ENCODE measurements at regions of chr6 and their contacts with region 1.

Region 1: GRCh38 chr6:136737871-136738691 is 54.2 kb downstream of the MAP3K5 start:
- DNase-seq: peak; percentile 70
- H3K4me3 ChIP-seq: no peak overlapping the region
- H3K27ac ChIP-seq: no peak overlapping the region
- H3K4me1 ChIP-seq: peaks cover 4% of the 10 kb centered on the region
- H3K27me3 ChIP-seq: no peaks in the 10 kb centered on the region
- CTCF ChIP-seq: no peak
- POLR2A ChIP-seq: no peak

Region 2: GRCh38 chr6:136716917-136717715 is 21.0 kb before region 1 on chr6:
- CTCF ChIA-PET with region 1: interaction called, 11 read pairs
- POLR2A ChIA-PET with region 1: no interaction called
- dilution Hi-C with region 1: no loop called
- intact Hi-C with region 1: loop called (anchors 2 kb)
- DNase-seq: no peak
- H3K4me3 ChIP-seq: peak overlapping the region in 2 of 3 experiments; percentile 9 to 36
- H3K27ac ChIP-seq: peak overlapping the region; percentile 45
- H3K4me1 ChIP-seq: peaks cover 28% of the 10 kb centered on the region
- H3K27me3 ChIP-seq: no peaks in the 10 kb centered on the region
- CTCF ChIP-seq: no peak
- POLR2A ChIP-seq: no peak

Region 3: DNA sequence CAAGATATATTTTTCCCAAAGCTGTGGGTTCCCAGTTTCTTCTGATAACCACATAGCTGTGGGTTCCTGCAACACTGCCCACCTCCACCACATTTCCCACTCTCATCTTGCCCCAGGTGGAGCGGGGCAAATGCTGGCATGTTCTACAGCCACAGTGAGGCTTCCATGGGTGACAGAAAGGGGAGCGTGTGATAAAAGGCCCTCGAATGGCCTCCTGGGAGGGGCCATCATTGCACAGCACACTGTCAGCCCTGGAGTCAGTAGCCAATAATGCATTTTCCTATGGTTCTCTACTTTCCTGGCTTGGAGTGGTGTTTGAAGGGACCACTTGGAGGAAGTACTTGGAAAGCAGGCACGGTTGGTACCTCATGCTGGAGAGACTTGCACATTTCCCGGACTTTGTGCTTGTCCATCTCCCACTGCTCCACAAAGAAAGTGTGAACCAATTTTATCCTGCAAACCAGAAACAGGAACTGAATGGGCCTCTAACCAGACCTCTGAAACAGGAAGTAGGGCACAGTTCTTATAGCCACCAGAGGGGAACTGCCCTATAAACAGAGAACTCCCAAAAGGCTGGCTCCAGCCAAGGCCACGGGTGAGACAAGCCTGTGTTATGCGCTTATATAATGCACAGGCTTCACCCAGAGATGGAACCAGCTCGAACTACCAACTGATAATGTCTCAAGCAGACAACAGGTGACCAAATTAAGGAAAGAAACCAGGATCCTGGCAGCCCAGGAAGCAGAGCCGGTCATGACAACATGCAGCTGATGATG is 45.6 kb after region 1 on chr6:
- CTCF ChIA-PET with region 1: no interaction called
- POLR2A ChIA-PET with region 1: no interaction called
- dilution Hi-C with region 1: no loop called
- intact Hi-C with region 1: loop called (anchors 5 kb)
- DNase-seq: no peak
- H3K4me3 ChIP-seq: no peak overlapping the region
- H3K27ac ChIP-seq: no peak overlapping the region
- H3K4me1 ChIP-seq: peaks cover 45% of the 10 kb centered on the region
- H3K27me3 ChIP-seq: no peaks in the 10 kb centered on the region
- CTCF ChIP-seq: no peak
- POLR2A ChIP-seq: no peak

Measured in endothelial cell of umbilical vein (primary cell).